ENCODE measurements at regions of chr3 and their contacts with region 1.

Region 1: GRCh38 chr3:134308350-134308891 is 57.8 kb upstream of the RYK start:
- DNase-seq: peak; percentile 94
- H3K4me3 ChIP-seq: no peak overlapping the region
- H3K27ac ChIP-seq: peak overlapping the region in 1 of 2 donors; percentile 11
- H3K4me1 ChIP-seq: peaks cover 6% of the 10 kb centered on the region
- H3K27me3 ChIP-seq: no peaks in the 10 kb centered on the region
- CTCF ChIP-seq: peak; percentile 99 to 100 (median 100)
- POLR2A ChIP-seq: no peak

Region 2: GRCh38 chr3:134212906-134213665 is 95.3 kb before region 1 on chr3:
- intact Hi-C with region 1: loop called (anchors 10 kb)
- DNase-seq: peak; percentile 89
- H3K4me3 ChIP-seq: no peak overlapping the region
- H3K27ac ChIP-seq: no peak overlapping the region
- H3K4me1 ChIP-seq: no peaks in the 10 kb centered on the region
- H3K27me3 ChIP-seq: no peaks in the 10 kb centered on the region
- CTCF ChIP-seq: peak; percentile 91 to 99 (median 94)
- POLR2A ChIP-seq: no peak

Region 3: DNA sequence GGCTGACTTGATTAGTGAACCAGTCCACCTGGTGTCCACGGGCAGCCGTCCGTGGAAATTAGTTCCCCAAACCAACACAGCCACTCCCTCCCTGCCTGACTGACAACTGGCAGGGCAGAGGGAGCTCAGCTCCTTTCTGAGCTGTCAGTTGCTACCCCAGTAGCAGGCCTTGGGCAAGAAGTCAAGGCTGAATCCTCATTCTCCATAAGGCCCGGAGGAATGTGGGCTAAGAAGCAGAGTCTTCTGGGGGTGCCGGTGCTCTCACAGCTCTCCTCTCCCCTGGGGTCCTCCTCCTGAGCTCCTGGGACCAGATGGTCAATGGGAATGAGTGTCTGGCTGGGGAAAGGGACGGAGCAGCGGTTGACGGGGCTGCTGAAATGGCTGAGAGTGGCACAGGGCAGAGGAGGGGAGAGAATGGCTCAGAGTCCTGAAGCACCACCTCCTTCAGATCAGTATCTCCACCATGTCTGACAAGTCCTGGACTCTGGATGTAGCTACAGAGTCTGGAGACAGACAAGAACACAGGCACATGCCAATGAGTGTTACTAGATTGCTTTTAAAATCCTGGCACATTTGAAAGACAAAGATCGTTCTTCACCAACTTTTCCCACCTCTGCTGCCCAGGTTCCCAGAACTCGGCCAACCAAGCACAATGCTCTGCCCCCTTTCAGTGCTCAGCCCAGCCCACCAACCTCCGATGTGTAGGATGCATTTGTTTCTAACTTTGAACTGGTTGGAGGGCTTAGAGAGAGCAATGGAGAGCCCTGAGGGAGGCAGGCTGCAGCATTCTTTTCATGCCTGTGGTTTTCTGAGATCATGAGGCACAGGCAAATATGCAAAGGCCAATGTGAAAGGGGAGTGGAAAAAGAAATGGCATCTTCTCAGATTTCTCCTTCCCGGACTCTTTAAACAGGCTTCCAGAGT is 49.1 kb after region 1 on chr3:
- intact Hi-C with region 1: loop called (anchors 5 kb)
- DNase-seq: peak; percentile 51
- H3K4me3 ChIP-seq: no peak overlapping the region
- H3K27ac ChIP-seq: peak overlapping the region; percentile 31 to 57
- H3K4me1 ChIP-seq: peaks cover 35% of the 10 kb centered on the region
- H3K27me3 ChIP-seq: no peaks in the 10 kb centered on the region
- CTCF ChIP-seq: no peak
- POLR2A ChIP-seq: no peak

Region 4: GRCh38 chr3:134473868-134474546 is 165.6 kb after region 1 on chr3:
- intact Hi-C with region 1: loop called (anchors 5 kb)
- DNase-seq: peak; percentile 91
- H3K4me3 ChIP-seq: no peak overlapping the region
- H3K27ac ChIP-seq: no peak overlapping the region
- H3K4me1 ChIP-seq: no peaks in the 10 kb centered on the region
- H3K27me3 ChIP-seq: no peaks in the 10 kb centered on the region
- CTCF ChIP-seq: peak; percentile 83 to 91 (median 87)
- POLR2A ChIP-seq: no peak

Region 5: GRCh38 chr3:134794950-134795745 is 486.7 kb after region 1 on chr3 and contains the start of gene EPHB1:
- intact Hi-C with region 1: no loop called
- DNase-seq: peak; percentile 96
- H3K4me3 ChIP-seq: peak within 1 kb of the TSS; percentile 54 to 66
- H3K27ac ChIP-seq: peak within 1 kb of the TSS; percentile 0 to 56
- H3K4me1 ChIP-seq: peaks cover 21% of the 10 kb centered on the region
- H3K27me3 ChIP-seq: no peaks in the 10 kb centered on the region
- CTCF ChIP-seq: peak; percentile 92 to 93 (median 93)
- POLR2A ChIP-seq: no peak
- total RNA-seq, gene EPHB1: 31.3 to 37.1 TPM

Measured in testis (tissue), 5 donors.